ENCODE measurements at regions of chr2 and their contacts with region 1.

Region 1: DNA sequence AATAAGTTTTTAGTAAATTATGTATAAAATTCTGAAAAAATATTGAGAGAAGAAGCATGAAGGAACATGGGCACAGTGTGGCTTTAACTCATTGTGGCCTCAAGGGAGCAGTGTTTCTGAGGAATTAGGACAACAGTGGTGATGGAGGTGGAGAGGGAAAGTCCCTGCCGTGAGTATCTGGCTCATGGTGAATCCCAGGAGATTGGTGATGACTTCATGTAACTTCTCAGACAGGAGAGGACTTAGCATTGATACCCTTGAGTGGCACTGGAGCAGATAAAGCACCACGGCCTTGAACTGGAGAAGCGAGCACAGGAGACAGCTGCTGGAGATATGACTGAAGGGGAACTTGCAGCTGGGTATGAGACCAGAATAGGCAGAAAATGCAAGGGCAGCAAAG is 35.0 kb upstream of the LRP1B start:
- DNase-seq: peak; percentile 74
- H3K4me3 ChIP-seq: no peak overlapping the region
- H3K27ac ChIP-seq: no peak overlapping the region
- H3K4me1 ChIP-seq: no peaks in the 10 kb centered on the region
- H3K27me3 ChIP-seq: peaks cover 0 to 5% of the 10 kb centered on the region in 2 experiments
- CTCF ChIP-seq: peak; percentile 30 to 53
- POLR2A ChIP-seq: no peak

Region 2: GRCh38 chr2:141364821-141365220 is 801.0 kb before region 1 on chr2:
- CTCF ChIA-PET with region 1: no interaction called
- POLR2A ChIA-PET with region 1: no interaction called
- dilution Hi-C with region 1: no loop called
- intact Hi-C with region 1: no loop called
- DNase-seq: no peak
- H3K4me3 ChIP-seq: no peak overlapping the region
- H3K27ac ChIP-seq: no peak overlapping the region
- H3K4me1 ChIP-seq: no peaks in the 10 kb centered on the region
- H3K27me3 ChIP-seq: no peaks in the 10 kb centered on the region
- CTCF ChIP-seq: no peak
- POLR2A ChIP-seq: no peak

Region 3: GRCh38 chr2:142153601-142154000 is 12.2 kb before region 1 on chr2:
- CTCF ChIA-PET with region 1: no interaction called
- POLR2A ChIA-PET with region 1: no interaction called
- dilution Hi-C with region 1: no loop called
- intact Hi-C with region 1: no loop called
- DNase-seq: no peak
- H3K4me3 ChIP-seq: no peak overlapping the region
- H3K27ac ChIP-seq: no peak overlapping the region
- H3K4me1 ChIP-seq: no peaks in the 10 kb centered on the region
- H3K27me3 ChIP-seq: no peaks in the 10 kb centered on the region
- CTCF ChIP-seq: no peak
- POLR2A ChIP-seq: no peak

Region 4: GRCh38 chr2:142286606-142287005 is 120.8 kb after region 1 on chr2:
- CTCF ChIA-PET with region 1: interaction called, 3 read pairs
- POLR2A ChIA-PET with region 1: no interaction called
- dilution Hi-C with region 1: no loop called
- intact Hi-C with region 1: loop called (anchors 10 kb)
- DNase-seq: no peak
- H3K4me3 ChIP-seq: no peak overlapping the region
- H3K27ac ChIP-seq: no peak overlapping the region
- H3K4me1 ChIP-seq: no peaks in the 10 kb centered on the region
- H3K27me3 ChIP-seq: no peaks in the 10 kb centered on the region
- CTCF ChIP-seq: peak; percentile 10 to 24
- POLR2A ChIP-seq: no peak

Region 5: DNA sequence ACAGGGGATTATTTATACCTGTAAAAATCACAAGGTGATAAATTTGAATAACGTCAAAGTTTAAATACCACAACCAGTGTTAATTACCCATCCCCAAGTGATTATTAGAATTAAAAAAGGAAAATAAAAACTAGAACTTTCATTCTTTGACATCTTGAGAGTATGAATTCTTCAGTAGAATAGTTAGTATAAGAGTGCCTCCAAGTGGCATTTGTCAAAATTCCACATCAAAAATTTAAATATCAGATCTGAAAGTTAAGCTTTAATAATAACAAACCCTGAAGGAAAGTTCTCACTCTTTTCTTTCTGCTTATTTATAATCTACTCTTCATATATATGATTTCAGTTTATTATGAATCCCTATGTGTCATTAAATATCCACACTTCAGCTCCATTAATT is 438.0 kb after region 1 on chr2:
- CTCF ChIA-PET with region 1: interaction called, 26 read pairs
- POLR2A ChIA-PET with region 1: no interaction called
- dilution Hi-C with region 1: no loop called
- intact Hi-C with region 1: loop called (anchors 5 kb)
- DNase-seq: peak; percentile 4
- H3K4me3 ChIP-seq: no peak overlapping the region
- H3K27ac ChIP-seq: no peak overlapping the region
- H3K4me1 ChIP-seq: no peaks in the 10 kb centered on the region
- H3K27me3 ChIP-seq: no peaks in the 10 kb centered on the region
- CTCF ChIP-seq: no peak
- POLR2A ChIP-seq: no peak

Region 6: DNA sequence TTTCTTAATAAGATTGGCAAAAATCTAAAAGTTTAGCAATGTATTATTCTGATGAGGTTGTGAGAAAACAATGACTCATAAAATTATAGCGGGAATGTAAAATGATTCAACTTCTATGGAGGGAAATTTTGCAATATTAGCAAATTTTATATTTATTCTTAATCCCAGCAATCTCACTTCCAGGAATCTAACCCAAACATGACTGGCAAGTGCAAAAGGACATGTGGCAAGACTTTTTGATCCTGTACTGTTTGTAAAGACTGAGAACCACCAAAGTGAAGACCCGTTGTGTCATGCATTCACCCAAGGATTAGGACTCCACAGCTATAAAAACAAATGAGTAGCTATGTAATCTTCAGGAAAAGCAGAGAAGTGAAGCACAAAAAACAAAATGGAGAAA is 476.9 kb after region 1 on chr2:
- CTCF ChIA-PET with region 1: interaction called, 23 read pairs
- POLR2A ChIA-PET with region 1: no interaction called
- dilution Hi-C with region 1: no loop called
- intact Hi-C with region 1: loop called (anchors 1 kb)
- DNase-seq: no peak
- H3K4me3 ChIP-seq: no peak overlapping the region
- H3K27ac ChIP-seq: no peak overlapping the region
- H3K4me1 ChIP-seq: no peaks in the 10 kb centered on the region
- H3K27me3 ChIP-seq: no peaks in the 10 kb centered on the region
- CTCF ChIP-seq: no peak
- POLR2A ChIP-seq: no peak

Region 7: GRCh38 chr2:142989273-142990204 is 823.7 kb after region 1 on chr2:
- CTCF ChIA-PET with region 1: interaction called, 24 read pairs
- POLR2A ChIA-PET with region 1: no interaction called
- dilution Hi-C with region 1: no loop called
- intact Hi-C with region 1: loop called (anchors 1 kb)
- DNase-seq: peak; percentile 46
- H3K4me3 ChIP-seq: no peak overlapping the region
- H3K27ac ChIP-seq: no peak overlapping the region
- H3K4me1 ChIP-seq: no peaks in the 10 kb centered on the region
- H3K27me3 ChIP-seq: no peaks in the 10 kb centered on the region
- CTCF ChIP-seq: peak; percentile 9 to 22
- POLR2A ChIP-seq: no peak

Measured in endothelial cell of umbilical vein (primary cell).